HCT116 (cell line): ENCODE measurements at regions of chr2 and their contacts with region 1.

Region 1: DNA sequence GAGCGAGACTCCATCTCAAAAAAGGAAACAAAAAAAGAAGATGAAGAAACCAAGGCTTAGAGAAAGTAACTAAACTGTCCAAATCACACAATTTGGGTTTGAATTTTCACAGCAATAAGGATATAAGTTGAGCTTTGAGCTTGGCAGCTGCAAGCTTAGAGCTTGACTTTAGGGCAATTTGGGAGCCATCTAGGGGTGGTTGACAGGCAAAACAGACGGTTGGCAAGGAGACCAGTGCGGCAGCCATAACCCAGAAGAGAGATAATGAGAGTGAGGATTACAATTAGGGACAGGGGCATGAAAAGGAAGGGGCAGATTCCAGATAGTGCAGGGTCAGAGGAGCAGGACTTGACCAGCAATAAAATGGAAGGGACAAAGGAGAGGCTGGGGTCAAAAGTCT is 382.2 kb upstream of the HNRNPA3 start:
- DNase-seq: no peak
- ATAC-seq: peak; percentile 87
- H3K4me3 ChIP-seq: no peak overlapping the region
- H3K27ac ChIP-seq: no peak overlapping the region
- H3K4me1 ChIP-seq: no peaks in the 10 kb centered on the region
- H3K27me3 ChIP-seq: peaks cover 59% of the 10 kb centered on the region
- CTCF ChIP-seq: peak in 1 of 3 experiments; percentile 24; a peak in 2 of 6 replicates
- POLR2A ChIP-seq: no peak
- RAD21 ChIP-seq: peak; percentile 20; the same call in 1 of the 2 replicates

Region 2: GRCh38 chr2:176814306-176815052 is 15.9 kb before region 1 on chr2:
- CTCF ChIA-PET with region 1: interaction called, 11 read pairs
- POLR2A ChIA-PET with region 1: no interaction called
- RAD21 ChIA-PET with region 1: interaction called in 1 of 2 experiments, 3 read pairs
- intact Hi-C with region 1: no loop called
- DNase-seq: peak; percentile 12
- ATAC-seq: peak; percentile 69
- H3K4me3 ChIP-seq: no peak overlapping the region
- H3K27ac ChIP-seq: no peak overlapping the region
- H3K4me1 ChIP-seq: no peaks in the 10 kb centered on the region
- H3K27me3 ChIP-seq: 0 out of 2 replicates have a peak, but pooled peaks cover 9% of the 10 kb centered on the region
- CTCF ChIP-seq: peak; percentile 25 to 61 (median 40); a peak in 3 of 6 replicates
- POLR2A ChIP-seq: no peak
- RAD21 ChIP-seq: peak; percentile 70